ENCODE measurements at regions of chr9 and their contacts with region 1.

Region 1: DNA sequence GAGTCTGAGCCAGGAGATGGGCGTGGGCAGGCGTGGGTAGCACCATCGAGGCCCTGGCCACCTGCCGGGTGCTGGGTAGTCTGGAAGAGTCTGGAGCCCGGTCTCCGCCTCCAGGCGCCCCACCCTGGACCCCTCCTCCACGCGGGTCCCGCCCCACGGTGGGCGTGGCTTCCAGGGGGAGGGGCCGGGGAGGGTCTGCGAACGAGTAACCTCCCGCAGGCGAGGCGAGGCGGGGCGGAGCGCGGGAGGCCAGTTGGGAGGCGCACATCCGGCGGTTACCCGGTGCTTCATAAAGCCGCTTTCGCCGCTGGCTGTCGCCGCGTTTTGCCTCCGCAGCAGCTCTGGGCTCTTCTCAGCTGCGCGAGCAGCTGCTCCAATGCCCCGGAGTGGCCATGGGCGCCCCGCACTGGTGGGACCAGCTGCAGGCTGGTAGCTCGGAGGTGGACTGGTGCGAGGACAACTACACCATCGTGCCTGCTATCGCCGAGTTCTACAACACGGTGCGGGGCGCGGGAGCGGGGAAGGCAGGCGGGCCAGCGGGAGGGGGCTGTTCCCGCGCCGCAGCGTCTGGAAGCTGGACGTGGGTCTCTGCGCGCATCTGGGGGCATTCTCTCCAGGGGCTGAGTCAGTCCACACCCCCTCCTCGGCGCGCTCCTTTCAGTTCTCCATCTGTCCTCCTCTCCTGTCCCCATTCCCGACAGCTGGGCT is at the start of gene ACER2:
- DNase-seq: peak; percentile 82 to 96 (median 90)
- H3K4me3 ChIP-seq: peak within 1 kb of the TSS; percentile 38 to 97 (median 86)
- H3K27ac ChIP-seq: peak within 1 kb of the TSS in 58 of 59 donors; percentile 21 to 99 (median 88)
- H3K27me3 ChIP-seq: no peaks in the 10 kb centered on the region
- CTCF ChIP-seq: peak in 26 of 56 donors; percentile 2 to 55 (median 26)
- total RNA-seq, gene ACER2: 4.6 to 16.6 (median 8.6) TPM

Region 2: DNA sequence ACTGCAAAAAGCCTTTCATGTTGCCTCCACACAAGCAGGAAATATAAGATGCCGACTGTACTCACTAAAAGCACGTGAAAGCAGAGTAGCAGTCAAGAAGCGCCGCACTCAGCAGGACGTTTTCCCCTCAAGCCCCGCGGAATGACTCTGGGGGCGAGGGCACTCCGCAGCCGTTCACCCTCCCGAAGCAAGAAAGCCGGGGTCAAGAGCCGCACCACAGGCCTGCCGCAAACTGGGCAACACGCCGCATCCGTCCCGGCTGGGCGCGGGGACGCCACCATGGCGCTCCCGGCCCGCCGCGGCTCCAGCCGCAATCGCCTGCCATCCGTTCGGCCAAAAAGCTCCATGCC is 29.2 kb before region 1 on chr9:
- intact Hi-C with region 1: loop called (anchors 1 to 2 kb)
- DNase-seq: peak in 3 of 10 donors; percentile 25 to 53 (median 32)
- H3K4me3 ChIP-seq: peak overlapping the region; percentile 58 to 95 (median 85)
- H3K27ac ChIP-seq: peak overlapping the region; percentile 60 to 98 (median 93)
- H3K27me3 ChIP-seq: no peaks in the 10 kb centered on the region
- CTCF ChIP-seq: no peak

Region 3: DNA sequence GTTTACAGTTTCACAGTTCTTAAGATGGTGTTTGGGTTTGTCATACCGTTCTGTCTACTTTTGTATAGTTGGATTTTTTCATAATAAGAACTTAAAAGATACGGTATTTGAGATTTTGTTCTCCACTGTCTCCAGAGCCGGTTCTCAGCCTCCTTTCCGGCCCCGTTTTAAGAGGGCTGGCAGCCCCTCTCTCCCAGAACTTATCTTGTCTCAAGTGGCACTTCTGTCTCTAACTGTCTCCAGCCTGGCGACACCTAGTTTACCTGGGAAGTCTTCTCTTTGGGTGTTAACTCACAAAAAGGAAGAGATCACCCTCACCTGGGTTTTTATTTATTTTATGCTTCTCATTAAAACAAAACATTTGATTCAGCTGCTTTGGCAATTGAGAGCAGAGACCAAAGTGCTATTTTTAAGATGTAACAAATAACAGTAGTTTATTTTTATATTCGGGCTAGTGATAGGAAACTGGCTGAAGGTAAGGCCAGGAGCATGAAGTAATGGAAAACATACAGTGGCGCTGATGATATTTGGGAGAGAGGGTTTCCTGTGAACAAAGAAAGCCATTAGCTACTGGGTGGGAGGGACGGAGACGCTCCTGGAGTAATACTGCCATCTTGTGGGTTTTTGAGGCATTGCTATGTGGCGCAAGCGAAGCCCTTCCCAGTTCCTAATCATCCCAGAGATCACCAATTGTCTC is 48.3 kb after region 1 on chr9:
- intact Hi-C with region 1: loop called in 1 of 2 experiments (anchors 10 kb)
- DNase-seq: peak in 8 of 10 donors; percentile 46 to 78 (median 69)
- H3K4me3 ChIP-seq: peak overlapping the region in 57 of 59 donors; percentile 8 to 72 (median 44)
- H3K27ac ChIP-seq: peak overlapping the region in 24 of 59 donors; percentile 1 to 78 (median 22)
- H3K27me3 ChIP-seq: no peaks in the 10 kb centered on the region
- CTCF ChIP-seq: peak in 55 of 56 donors; percentile 64 to 99 (median 95)

Measured in dorsolateral prefrontal cortex (tissue), 120 donors.